Activated CD4-positive, alpha-beta T cell treated with anti-CD3 and anti-CD28 coated beads, Interleukin-2, amount 10 ng/mL, durations not matched to agents 24 days and 14 days (primary cell): ENCODE measurements at regions of chr1 and their contacts with region 1.

Region 1: GRCh38 chr1:92367496-92367895 is 68.6 kb downstream of the RPAP2 start:
- DNase-seq: peak; percentile 65
- H3K4me3 Mint-ChIP-seq: peak overlapping the region; percentile 31
- H3K27ac Mint-ChIP-seq: no peak overlapping the region
- H3K4me1 Mint-ChIP-seq: peaks cover 42% of the 10 kb centered on the region
- H3K27me3 Mint-ChIP-seq: no peaks in the 10 kb centered on the region

Region 2: DNA sequence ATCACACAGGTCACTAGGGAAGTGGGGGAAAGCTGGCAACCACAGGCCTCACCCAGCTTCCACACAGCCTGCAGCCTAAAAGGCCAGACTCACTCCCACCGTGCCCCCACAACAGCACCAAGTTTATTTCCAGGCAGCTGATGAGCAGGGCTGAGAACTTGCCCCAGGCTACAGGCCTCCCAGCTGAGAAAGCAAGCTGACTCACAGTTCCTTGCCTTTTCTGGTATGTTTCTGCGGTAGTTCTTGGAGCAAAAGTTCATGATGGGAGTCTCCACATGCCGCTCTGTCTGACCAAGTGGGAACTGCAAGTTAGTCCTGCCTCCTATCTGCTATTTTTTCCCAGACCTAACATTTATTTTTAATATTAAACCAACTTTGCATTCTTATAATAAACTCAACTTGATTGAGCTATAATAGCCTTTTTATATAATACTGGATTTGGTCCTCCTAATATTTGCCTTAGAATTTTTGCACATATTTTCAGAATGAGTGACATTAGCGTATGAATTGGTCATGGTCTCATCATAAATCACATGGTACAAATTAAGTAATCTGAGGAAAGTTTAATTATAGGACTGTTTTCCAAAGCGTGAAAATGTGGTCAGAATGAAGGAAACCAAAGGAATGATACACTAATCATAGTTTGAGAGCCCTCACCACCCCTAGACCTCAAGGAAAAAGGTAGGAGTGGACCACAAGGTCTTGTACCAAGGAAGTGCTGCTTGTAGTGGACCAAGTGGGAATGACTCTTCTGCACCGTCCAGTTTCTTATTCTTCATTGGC is 38.0 kb before region 1 on chr1:
- intact Hi-C with region 1: loop called (anchors 5 kb)
- DNase-seq: no peak
- H3K4me3 Mint-ChIP-seq: no peak overlapping the region
- H3K27ac Mint-ChIP-seq: no peak overlapping the region
- H3K4me1 Mint-ChIP-seq: peaks cover 29% of the 10 kb centered on the region
- H3K27me3 Mint-ChIP-seq: no peaks in the 10 kb centered on the region

Region 3: GRCh38 chr1:92473781-92474495 is 106.4 kb after region 1 on chr1:
- intact Hi-C with region 1: loop called (anchors 2 kb)
- DNase-seq: peak; percentile 80
- H3K4me3 Mint-ChIP-seq: peak overlapping the region; percentile 48
- H3K27ac Mint-ChIP-seq: peak overlapping the region; percentile 89
- H3K4me1 Mint-ChIP-seq: peaks cover 67% of the 10 kb centered on the region
- H3K27me3 Mint-ChIP-seq: no peaks in the 10 kb centered on the region